HCT116 (cell line): ENCODE measurements at regions of chr2 and their contacts with region 1.

Region 1: DNA sequence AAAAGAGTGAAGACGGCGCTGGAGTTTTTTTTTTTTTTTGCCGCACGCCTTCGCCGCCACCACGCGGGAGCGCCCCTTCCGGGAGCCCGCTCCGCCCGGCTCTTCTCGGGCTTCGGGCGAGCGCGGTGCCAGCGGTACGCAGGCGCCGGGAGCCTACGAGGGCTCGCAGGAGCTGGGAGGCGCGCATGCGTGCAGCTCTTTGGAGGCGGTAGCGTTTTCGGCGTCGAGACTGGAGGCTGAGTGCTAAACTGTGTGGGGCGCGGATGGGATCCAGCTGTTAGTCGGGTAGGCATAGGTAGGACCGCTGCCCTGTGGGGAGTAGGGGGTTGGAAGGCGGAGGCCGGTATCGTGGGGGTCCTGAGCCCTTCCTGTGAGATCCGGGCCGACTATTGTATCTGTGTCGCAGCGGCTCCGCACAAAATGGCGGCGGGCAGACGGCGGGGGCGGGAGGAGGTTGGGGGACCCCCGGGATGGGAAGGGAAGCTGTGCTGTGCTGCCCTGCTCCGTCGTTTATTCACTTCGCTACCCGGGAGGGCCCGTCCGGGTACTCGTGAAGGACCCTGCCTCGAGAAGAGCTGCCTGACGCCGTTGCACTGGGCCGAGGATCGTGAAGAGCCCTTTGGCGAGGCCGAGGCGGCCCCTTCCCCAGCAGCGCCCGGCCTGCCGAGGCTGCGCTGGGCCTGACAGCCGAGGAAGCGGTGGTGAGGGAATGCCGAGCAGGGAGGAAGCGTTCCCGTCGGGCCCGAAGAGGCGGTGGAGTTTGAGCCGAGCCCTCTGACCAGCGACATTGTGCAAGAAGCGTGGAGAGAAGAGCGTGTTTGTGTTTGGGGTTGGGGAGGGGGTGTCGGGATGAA is at the start of gene ZNF638:
- DNase-seq: peak; percentile 82
- ATAC-seq: peak; percentile 98
- H3K4me3 ChIP-seq: peak within 1 kb of the TSS; percentile 82 to 96
- H3K27ac ChIP-seq: peak within 1 kb of the TSS; percentile 77
- H3K4me1 ChIP-seq: peaks cover 0 to 26% of the 10 kb centered on the region in 2 experiments; a peak in 3 of 4 replicates
- H3K27me3 ChIP-seq: no peaks in the 10 kb centered on the region
- CTCF ChIP-seq: peak; percentile 45 to 61 (median 51); a peak in 5 of 6 replicates
- POLR2A ChIP-seq: peak; percentile 71
- RAD21 ChIP-seq: peak; percentile 43
- total RNA-seq, gene ZNF638: 108 TPM

Region 2: GRCh38 chr2:71226965-71227560 is 104.7 kb before region 1 on chr2 and contains the start of gene PAIP2B:
- CTCF ChIA-PET with region 1: interaction called, 5 read pairs
- POLR2A ChIA-PET with region 1: interaction called, 7 read pairs
- RAD21 ChIA-PET with region 1: no interaction called
- intact Hi-C with region 1: loop called (anchors 10 kb)
- DNase-seq: peak; percentile 99
- ATAC-seq: peak; percentile 92
- H3K4me3 ChIP-seq: peak within 1 kb of the TSS; percentile 67 to 71
- H3K27ac ChIP-seq: peak within 1 kb of the TSS; percentile 39; the same call in 1 of the 2 replicates
- H3K4me1 ChIP-seq: peaks cover 3 to 20% of the 10 kb centered on the region in 2 experiments; a peak in 3 of 4 replicates
- H3K27me3 ChIP-seq: no peaks in the 10 kb centered on the region
- CTCF ChIP-seq: no peak
- POLR2A ChIP-seq: peak; percentile 42
- RAD21 ChIP-seq: no peak
- total RNA-seq, gene PAIP2B: 5.9 TPM

Region 3: GRCh38 chr2:71299507-71299906 is 32.3 kb before region 1 on chr2:
- CTCF ChIA-PET with region 1: interaction called, 32 read pairs
- POLR2A ChIA-PET with region 1: interaction called, 8 read pairs
- RAD21 ChIA-PET with region 1: no interaction called
- intact Hi-C with region 1: no loop called
- DNase-seq: no peak
- ATAC-seq: no peak; the same call in 1 of the 2 replicates
- H3K4me3 ChIP-seq: no peak overlapping the region
- H3K27ac ChIP-seq: no peak overlapping the region
- H3K4me1 ChIP-seq: no peaks in the 10 kb centered on the region
- H3K27me3 ChIP-seq: no peaks in the 10 kb centered on the region
- CTCF ChIP-seq: peak; percentile 58 to 77 (median 64); a peak in 5 of 6 replicates
- POLR2A ChIP-seq: no peak
- RAD21 ChIP-seq: peak; percentile 75

Region 4: DNA sequence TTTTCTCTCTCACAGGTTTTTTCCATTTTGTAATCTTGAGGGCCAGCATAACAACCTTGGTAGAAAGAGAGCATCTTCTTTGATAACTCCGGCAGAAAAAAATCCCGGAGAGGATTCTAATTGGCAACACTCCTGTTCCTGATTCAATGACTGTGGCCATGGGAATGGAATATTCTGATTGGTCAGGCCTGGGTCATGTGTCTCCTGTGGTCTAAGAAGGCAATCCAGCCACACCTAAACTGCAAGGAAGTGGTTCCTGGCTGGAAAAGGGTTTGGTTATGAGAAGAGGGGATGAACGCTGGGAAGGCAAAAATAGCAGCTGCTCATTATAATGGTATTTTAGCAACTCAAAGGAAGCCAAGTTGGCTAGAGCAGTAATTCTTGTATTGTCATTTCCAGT is 25.0 kb before region 1 on chr2:
- CTCF ChIA-PET with region 1: interaction called, 10 read pairs
- POLR2A ChIA-PET with region 1: no interaction called
- RAD21 ChIA-PET with region 1: interaction called in 1 of 2 experiments, 3 read pairs
- intact Hi-C with region 1: no loop called
- DNase-seq: no peak
- ATAC-seq: no peak
- H3K4me3 ChIP-seq: no peak overlapping the region
- H3K27ac ChIP-seq: no peak overlapping the region
- H3K4me1 ChIP-seq: no peaks in the 10 kb centered on the region
- H3K27me3 ChIP-seq: no peaks in the 10 kb centered on the region
- CTCF ChIP-seq: no peak
- POLR2A ChIP-seq: no peak
- RAD21 ChIP-seq: no peak